ENCODE measurements at regions of chr12 and their contacts with region 1.

Region 1: DNA sequence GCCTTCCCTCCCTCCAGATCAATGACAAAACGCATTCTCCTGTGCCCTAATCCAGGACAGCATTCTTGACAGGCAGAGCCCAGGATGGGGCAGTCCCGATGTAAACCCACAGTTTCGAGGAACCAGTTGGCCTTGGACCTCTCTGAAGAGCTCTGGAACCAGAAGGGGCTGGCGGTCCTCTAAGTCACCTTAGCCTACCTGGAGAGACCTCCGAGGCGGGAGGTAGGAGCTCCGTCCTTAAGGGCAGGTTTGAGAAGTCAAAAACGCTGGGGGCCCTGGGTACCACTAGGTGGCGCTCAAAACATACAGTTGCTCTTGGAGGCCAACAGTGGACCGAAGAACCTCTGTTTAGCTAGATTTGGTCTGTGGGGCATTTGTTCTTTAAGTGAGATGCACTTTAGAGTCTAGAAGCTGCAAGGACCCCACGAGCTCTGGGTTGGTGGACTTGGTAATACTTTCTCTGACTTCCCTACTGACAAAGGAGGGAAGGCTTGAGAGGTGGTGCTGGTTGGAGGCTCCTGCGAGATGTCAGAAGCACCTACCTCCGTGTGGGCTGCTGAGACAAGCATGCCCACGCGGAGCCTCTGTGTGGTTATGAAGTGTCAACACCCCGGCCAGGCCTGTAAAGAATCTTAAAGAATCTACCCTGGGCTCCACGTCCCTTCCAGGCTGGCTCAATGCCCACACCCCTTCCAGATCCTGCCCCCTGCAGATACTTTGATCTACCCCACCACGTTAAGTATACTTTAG is 74.8 kb upstream of the CHST11 start:
- DNase-seq: peak; percentile 44
- ATAC-seq: peak; percentile 98
- H3K4me3 ChIP-seq: no peak overlapping the region
- H3K27ac ChIP-seq: no peak overlapping the region
- H3K4me1 ChIP-seq: no peaks in the 10 kb centered on the region
- H3K27me3 ChIP-seq: no peaks in the 10 kb centered on the region
- CTCF ChIP-seq: peak; percentile 91 to 92 (median 91); a peak in 5 of 6 replicates
- EP300 ChIP-seq: no peak
- POLR2A ChIP-seq: no peak
- RAD21 ChIP-seq: peak; percentile 100

Region 2: GRCh38 chr12:104163631-104164030 is 218.3 kb before region 1 on chr12:
- CTCF ChIA-PET with region 1: no interaction called
- POLR2A ChIA-PET with region 1: no interaction called
- RAD21 ChIA-PET with region 1: no interaction called
- SMC1A ChIA-PET with region 1: no interaction called
- in situ Hi-C with region 1: no loop called
- intact Hi-C with region 1: no loop called
- DNase-seq: no peak
- ATAC-seq: no peak
- H3K4me3 ChIP-seq: no peak overlapping the region
- H3K27ac ChIP-seq: no peak overlapping the region
- H3K4me1 ChIP-seq: no peaks in the 10 kb centered on the region
- H3K27me3 ChIP-seq: no peaks in the 10 kb centered on the region
- CTCF ChIP-seq: no peak
- EP300 ChIP-seq: no peak
- POLR2A ChIP-seq: no peak
- RAD21 ChIP-seq: no peak

Region 3: DNA sequence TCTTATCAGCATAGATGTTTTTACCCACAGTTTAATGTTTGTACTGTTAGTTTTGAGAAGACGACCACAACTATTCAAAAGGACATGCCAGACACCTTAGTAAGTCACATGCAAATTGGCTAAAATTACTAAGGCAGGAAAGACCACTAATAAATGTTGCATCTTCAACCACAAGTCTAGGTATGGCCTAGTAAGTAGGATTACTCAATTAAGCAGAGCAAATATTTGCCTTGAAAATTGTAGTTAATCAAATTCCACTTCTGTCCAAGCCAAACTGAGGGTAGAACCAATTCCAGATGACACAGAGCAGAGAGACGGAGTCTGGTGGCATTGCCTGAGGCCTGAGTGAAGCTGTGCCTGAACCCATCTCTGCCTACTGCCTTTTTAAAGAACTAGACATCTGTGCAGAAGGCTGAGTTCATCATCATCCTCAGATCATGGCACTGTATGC is 45.1 kb after region 1 on chr12:
- CTCF ChIA-PET with region 1: interaction called, 6 read pairs
- POLR2A ChIA-PET with region 1: no interaction called
- RAD21 ChIA-PET with region 1: interaction called, 3 read pairs
- SMC1A ChIA-PET with region 1: interaction called, 13 read pairs
- in situ Hi-C with region 1: no loop called
- intact Hi-C with region 1: no loop called
- DNase-seq: no peak
- ATAC-seq: peak; percentile 76
- H3K4me3 ChIP-seq: no peak overlapping the region
- H3K27ac ChIP-seq: no peak overlapping the region
- H3K4me1 ChIP-seq: no peaks in the 10 kb centered on the region; the same call in 1 of the 2 replicates
- H3K27me3 ChIP-seq: no peaks in the 10 kb centered on the region
- CTCF ChIP-seq: no peak
- EP300 ChIP-seq: peak in 1 of 2 experiments; percentile 36; a peak in 1 of 4 replicates
- POLR2A ChIP-seq: no peak
- RAD21 ChIP-seq: no peak

Region 4: DNA sequence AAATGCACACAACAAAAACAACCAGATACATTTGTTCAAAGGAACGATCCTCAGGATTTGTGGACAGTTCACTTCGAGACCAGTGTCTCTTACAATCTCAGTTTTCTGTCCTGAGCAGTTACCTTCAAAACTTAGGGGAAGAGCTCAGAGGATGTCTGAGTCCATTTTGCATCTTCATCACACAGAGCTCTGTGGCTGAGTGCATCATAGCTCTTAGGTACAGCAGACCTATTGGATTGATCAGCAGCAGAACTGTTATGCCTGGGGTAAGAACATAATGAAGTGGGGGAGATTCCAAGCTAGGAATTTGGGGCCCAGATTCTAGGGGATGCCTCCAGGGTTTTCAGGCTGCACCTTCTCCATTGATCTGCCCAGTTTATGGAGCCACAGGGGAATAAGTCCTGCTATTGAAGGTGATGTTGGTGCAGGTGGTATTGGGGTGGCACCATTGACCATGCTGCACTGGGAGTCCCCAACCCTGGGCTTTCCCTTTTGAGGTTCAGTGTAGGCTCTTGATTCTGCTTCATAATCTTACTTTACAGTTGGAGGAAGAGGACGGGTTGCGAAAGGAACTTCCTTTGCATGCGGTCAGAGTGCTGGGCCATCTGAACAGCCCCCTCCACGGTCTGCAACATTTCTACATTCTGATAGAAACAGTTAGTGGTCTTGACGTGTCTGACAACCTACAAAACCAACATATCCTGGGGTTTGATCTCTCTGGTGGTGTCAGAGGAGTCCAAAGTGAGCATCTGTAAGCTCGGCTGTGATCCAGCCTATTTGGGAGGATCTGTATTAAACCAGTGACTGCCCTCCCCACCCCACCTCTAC is 187.7 kb after region 1 on chr12:
- CTCF ChIA-PET with region 1: interaction called, 20 read pairs
- POLR2A ChIA-PET with region 1: interaction called, 3 read pairs
- RAD21 ChIA-PET with region 1: interaction called, 6 read pairs
- SMC1A ChIA-PET with region 1: interaction called, 23 read pairs
- in situ Hi-C with region 1: no loop called
- intact Hi-C with region 1: no loop called
- DNase-seq: peak; percentile 88
- ATAC-seq: peak; percentile 83
- H3K4me3 ChIP-seq: peak overlapping the region; percentile 67
- H3K27ac ChIP-seq: peak overlapping the region; percentile 95
- H3K4me1 ChIP-seq: peaks cover 43% of the 10 kb centered on the region
- H3K27me3 ChIP-seq: no peaks in the 10 kb centered on the region
- CTCF ChIP-seq: no peak
- EP300 ChIP-seq: peak; percentile 46 to 77; a peak in 1 of 4 replicates
- POLR2A ChIP-seq: peak; percentile 48; the same call in 1 of the 2 replicates
- RAD21 ChIP-seq: peak; percentile 20; the same call in 1 of the 2 replicates

Region 5: GRCh38 chr12:104680066-104680465 is 298.2 kb after region 1 on chr12:
- CTCF ChIA-PET with region 1: interaction called, 5 read pairs
- POLR2A ChIA-PET with region 1: no interaction called
- RAD21 ChIA-PET with region 1: interaction called, 5 read pairs
- SMC1A ChIA-PET with region 1: interaction called, 5 read pairs
- in situ Hi-C with region 1: no loop called
- intact Hi-C with region 1: loop called (anchors 2 kb)
- DNase-seq: peak; percentile 51
- ATAC-seq: peak; percentile 72
- H3K4me3 ChIP-seq: no peak overlapping the region
- H3K27ac ChIP-seq: no peak overlapping the region
- H3K4me1 ChIP-seq: peaks cover 44% of the 10 kb centered on the region
- H3K27me3 ChIP-seq: no peaks in the 10 kb centered on the region
- CTCF ChIP-seq: peak; percentile 57 to 75 (median 69); a peak in 5 of 6 replicates
- EP300 ChIP-seq: no peak
- POLR2A ChIP-seq: no peak
- RAD21 ChIP-seq: peak; percentile 90

Region 6: GRCh38 chr12:104805186-104805585 is 423.3 kb after region 1 on chr12:
- CTCF ChIA-PET with region 1: interaction called, 10 read pairs
- POLR2A ChIA-PET with region 1: no interaction called
- RAD21 ChIA-PET with region 1: interaction called, 8 read pairs
- SMC1A ChIA-PET with region 1: no interaction called
- in situ Hi-C with region 1: no loop called
- intact Hi-C with region 1: no loop called
- DNase-seq: no peak
- ATAC-seq: no peak
- H3K4me3 ChIP-seq: no peak overlapping the region
- H3K27ac ChIP-seq: no peak overlapping the region
- H3K4me1 ChIP-seq: no peaks in the 10 kb centered on the region
- H3K27me3 ChIP-seq: no peaks in the 10 kb centered on the region
- CTCF ChIP-seq: no peak
- EP300 ChIP-seq: no peak
- POLR2A ChIP-seq: no peak
- RAD21 ChIP-seq: no peak

Region 7: DNA sequence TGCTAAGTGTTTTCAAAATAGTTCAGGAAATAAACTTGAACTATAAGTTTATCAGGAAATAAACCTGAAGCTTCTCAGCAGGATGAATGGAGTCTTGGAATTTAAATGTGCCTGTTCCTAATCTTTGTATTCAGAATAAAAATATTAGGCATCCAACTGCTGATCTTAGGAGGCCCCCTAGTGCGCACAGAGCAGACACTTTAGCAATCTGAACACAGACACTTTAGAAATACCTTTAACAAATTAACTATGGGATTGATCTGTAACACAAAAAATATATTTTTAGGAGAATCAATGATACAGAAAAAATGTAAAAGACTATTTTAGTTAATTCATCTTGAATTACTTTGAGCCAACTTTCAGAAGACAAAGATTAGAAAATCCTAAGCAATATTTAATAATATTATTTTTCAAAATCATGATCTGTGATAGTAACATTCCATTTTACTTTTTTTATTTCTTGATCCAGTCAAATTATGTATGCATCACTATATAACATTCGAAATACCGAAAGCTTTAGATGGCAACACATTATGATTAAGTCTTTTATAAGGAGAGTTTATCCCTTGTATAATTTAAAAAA is 495.3 kb after region 1 on chr12:
- CTCF ChIA-PET with region 1: interaction called, 19 read pairs
- POLR2A ChIA-PET with region 1: no interaction called
- RAD21 ChIA-PET with region 1: interaction called, 12 read pairs
- SMC1A ChIA-PET with region 1: interaction called, 17 read pairs
- in situ Hi-C with region 1: loop called (anchors 5 kb)
- intact Hi-C with region 1: loop called (anchors 2 kb)
- DNase-seq: no peak
- ATAC-seq: peak; percentile 62
- H3K4me3 ChIP-seq: no peak overlapping the region
- H3K27ac ChIP-seq: no peak overlapping the region
- H3K4me1 ChIP-seq: no peaks in the 10 kb centered on the region
- H3K27me3 ChIP-seq: no peaks in the 10 kb centered on the region
- CTCF ChIP-seq: peak; percentile 42 to 64 (median 46); a peak in 5 of 6 replicates
- EP300 ChIP-seq: no peak
- POLR2A ChIP-seq: no peak
- RAD21 ChIP-seq: peak; percentile 87